ENCODE measurements at regions of chr9 and their contacts with region 1.

Region 1: DNA sequence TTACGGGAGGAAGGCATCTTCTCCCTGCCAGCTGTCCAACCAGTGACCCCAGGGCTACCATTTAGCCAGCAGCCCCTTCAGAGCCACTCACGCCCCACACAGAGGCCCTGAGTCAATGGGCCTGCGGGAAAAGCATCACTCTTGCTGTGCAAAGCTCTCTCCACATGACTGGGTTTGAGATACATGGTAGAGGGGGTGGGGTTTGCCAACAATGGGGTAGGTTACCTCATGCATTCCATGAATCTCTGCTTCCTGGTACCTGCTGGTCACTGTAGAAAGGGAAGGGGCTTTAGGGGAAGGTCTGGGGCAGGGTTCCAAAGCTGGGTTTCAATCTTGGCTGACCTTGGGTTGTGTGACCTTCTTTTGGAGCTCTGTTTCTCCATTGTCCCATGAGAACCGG is 22.9 kb upstream of the TTLL11 start:
- H3K4me3 ChIP-seq: no peak overlapping the region
- H3K27ac ChIP-seq: no peak overlapping the region
- H3K4me1 ChIP-seq: no peaks in the 10 kb centered on the region
- CTCF ChIP-seq: no peak

Region 2: GRCh38 chr9:122092611-122093506 is 23.2 kb before region 1 on chr9 and contains the start of gene TTLL11:
- CTCF ChIA-PET with region 1: interaction called, 371 read pairs
- POLR2A ChIA-PET with region 1: no interaction called
- H3K4me3 ChIP-seq: peak within 1 kb of the TSS; percentile 67
- H3K27ac ChIP-seq: no peak within 1 kb of the TSS
- H3K4me1 ChIP-seq: no peaks in the 10 kb centered on the region
- CTCF ChIP-seq: no peak